ENCODE measurements at regions of chr11 and their contacts with region 1.

Region 1: DNA sequence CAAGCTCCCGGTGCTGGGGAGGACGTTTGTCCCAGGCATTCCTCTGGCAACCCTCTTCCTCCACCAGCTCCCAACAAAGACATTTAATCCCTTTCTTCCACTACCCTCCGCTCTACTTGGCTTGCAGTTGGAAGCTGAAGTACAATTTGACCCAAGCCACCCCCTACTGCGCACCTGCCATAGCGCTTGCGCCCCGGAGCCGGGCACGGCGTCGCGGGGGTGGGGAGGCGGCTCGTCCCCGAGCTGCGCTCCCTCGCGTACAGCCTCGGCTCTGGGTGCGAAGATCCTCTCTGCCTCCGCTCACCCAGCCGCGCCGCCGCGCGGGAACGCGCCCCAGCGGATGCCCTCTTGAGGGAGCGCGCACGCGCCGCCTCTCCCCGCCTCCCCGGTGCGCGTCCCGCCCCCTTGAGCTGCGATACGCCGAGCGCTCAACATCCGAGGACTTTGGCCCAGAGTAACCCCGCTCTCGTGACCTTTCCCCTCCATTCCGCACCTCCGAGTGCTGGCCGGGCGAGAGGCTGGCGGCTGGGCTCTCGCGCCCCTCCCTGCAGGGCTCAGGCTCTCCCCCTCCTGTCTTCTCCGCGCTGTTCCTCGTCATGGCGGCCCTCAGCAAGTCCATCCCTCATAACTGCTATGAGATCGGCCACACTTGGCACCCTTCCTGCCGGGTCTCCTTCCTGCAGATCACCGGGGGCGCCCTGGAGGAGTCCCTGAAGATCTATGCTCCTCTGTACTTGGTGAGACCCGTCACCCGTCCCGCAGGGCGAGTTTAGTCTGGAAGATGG is at the start of gene TMEM135:
- DNase-seq: peak; percentile 86 to 96 (median 92)
- H3K4me3 ChIP-seq: peak within 1 kb of the TSS; percentile 53 to 98 (median 85)
- H3K27ac ChIP-seq: peak within 1 kb of the TSS in 58 of 59 donors; percentile 60 to 96 (median 89)
- H3K27me3 ChIP-seq: no peaks in the 10 kb centered on the region
- CTCF ChIP-seq: peak in 45 of 56 donors; percentile 8 to 62 (median 33)
- total RNA-seq, gene TMEM135: 23.6 to 75.3 (median 39.3) TPM

Region 2: GRCh38 chr11:86955361-86956120 is 82.1 kb before region 1 on chr11 and contains the start of gene FZD4:
- intact Hi-C with region 1: loop called (anchors 2 kb)
- DNase-seq: peak; percentile 64 to 94 (median 85)
- H3K4me3 ChIP-seq: peak within 1 kb of the TSS; percentile 54 to 97 (median 87)
- H3K27ac ChIP-seq: peak within 1 kb of the TSS; percentile 13 to 95 (median 87)
- H3K27me3 ChIP-seq: no peaks in the 10 kb centered on the region
- CTCF ChIP-seq: peak in 39 of 56 donors; percentile 15 to 54 (median 32)
- total RNA-seq, gene FZD4: 5.3 to 20.4 (median 11.1) TPM

Region 3: DNA sequence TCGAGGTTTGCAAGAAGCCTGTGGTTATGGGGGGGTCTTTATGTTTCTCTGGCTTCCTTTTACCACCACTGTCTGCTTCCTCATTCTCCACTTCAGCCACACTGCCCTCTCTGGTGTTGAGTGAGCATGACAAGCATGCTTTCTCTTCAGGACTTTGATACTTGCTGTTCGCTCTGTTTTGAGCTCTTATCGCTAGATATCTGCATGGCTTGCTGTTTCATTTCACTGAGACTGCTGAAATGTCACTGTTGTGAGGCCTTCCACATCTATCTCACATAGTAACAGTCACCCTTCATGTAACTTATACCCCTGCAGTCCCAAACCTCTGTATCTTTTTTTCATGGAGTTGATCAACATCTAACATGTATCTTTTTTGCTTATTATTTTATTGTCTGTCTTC is 59.9 kb after region 1 on chr11:
- intact Hi-C with region 1: no loop called
- DNase-seq: no peak
- H3K4me3 ChIP-seq: no peak overlapping the region
- H3K27ac ChIP-seq: peak overlapping the region in 1 of 59 donors; percentile 27
- H3K27me3 ChIP-seq: no peaks in the 10 kb centered on the region
- CTCF ChIP-seq: peak in 53 of 56 donors; percentile 19 to 66 (median 49)

Measured in dorsolateral prefrontal cortex (tissue), 120 donors.